ENCODE measurements at regions of chr10 and their contacts with region 1.

Region 1: DNA sequence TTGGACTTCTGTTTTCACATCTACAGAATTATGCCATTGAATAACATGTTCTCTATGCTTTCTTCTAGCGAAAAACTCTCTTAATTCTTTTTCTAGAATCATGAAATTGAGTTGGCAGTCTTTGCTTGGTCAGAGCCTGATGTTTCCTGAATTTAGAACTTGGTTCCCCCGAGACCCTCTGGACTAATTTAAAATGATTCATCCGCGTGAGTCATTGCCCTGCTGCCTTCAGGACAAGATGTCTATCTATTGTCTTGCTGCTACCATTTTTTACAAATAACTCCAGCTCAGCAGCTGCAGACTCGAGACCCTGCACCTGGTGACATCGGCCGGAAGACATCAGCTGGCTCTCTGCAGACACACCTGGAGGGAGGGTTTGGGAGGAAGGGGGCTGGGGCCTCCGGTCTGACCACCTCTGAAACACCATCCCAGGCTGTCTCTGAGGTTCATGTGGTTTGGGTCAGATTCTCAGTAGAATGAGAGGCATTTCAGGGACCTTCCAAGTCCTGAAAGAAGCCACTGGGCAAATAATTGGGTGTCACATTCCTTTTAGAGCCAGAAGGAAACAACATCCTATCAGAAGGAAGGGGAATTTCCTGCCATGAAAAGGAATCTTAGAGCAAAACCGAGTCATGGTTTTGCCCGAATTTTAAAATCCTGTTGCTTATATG is 20.9 kb upstream of the KLF6 start:
- DNase-seq: peak; percentile 45
- H3K4me3 Mint-ChIP-seq: peak overlapping the region; percentile 10
- H3K27ac Mint-ChIP-seq: no peak overlapping the region
- H3K4me1 Mint-ChIP-seq: peaks cover 73% of the 10 kb centered on the region
- H3K27me3 Mint-ChIP-seq: no peaks in the 10 kb centered on the region

Region 2: DNA sequence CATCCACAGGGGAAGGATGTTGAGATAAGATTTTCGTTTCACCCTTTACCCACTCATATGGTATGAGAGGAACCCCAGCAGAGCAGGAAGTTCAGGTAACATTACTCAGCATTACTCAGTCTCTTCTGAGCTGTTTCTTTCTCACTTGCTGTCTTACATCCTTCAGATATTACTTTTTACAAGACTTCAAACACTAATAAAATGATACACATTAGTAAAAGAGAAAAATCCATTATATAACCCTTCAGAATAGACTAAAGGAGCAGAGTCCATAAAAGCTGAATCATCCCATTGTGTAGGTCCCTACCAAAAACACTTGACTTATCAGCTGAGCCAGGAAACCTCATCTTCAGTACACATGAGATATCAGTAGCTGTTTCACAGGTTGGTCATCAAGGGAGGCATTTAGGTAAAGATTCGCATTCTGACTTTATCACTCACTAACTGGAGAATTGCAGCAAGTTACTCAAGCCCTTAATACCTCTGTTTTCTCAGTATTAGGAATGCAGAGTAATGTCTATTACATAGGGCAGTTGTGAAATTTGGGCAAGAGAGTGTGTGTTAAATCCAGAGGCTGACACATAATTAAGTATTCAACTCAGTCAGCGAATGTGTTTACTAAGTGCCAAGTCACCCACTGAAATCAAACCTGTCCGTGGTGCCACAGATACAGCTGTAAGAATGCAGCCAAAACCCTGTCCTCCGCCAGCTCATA is 65.6 kb before region 1 on chr10:
- CTCF ChIA-PET with region 1: no interaction called
- intact Hi-C with region 1: loop called (anchors 1 kb)
- DNase-seq: no peak
- H3K4me3 Mint-ChIP-seq: no peak overlapping the region
- H3K27ac Mint-ChIP-seq: peak overlapping the region; percentile 59
- H3K4me1 Mint-ChIP-seq: peaks cover 31% of the 10 kb centered on the region
- H3K27me3 Mint-ChIP-seq: no peaks in the 10 kb centered on the region

Region 3: DNA sequence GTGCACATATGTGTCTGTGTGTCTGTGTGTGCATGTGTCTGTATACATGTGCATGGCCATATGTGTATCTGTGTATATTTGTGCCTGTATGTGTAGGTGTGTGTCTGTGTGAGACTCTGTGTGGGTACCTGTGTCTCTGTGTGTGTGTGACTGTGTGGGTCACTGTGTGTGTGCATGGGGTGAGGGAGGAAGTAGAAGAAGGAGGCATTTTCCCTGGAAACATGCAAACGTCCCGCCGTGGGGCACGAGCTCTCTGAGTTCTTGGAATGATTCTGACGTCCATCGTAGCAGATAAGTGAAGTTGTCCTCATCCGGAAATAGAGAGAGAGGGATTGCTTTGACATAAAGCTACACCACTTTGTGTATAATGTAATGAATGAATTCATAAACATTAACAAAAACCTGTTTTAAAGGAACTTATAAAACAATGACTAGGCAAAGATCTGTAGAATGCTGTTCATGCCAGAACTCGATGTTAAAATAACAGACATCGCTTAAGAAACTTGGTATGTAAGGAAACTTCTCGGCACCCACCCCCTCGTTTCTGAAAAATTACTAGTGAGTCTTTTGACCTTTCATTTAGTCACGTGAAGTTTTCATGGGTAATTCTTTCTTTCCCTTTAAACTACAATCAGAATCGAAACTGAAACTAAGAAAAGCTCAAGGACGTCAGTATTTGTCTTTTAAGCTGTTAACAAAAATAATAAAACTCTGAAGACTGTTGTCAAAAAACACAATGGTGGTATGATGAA is 22.7 kb after region 1 on chr10:
- CTCF ChIA-PET with region 1: no interaction called
- intact Hi-C with region 1: loop called (anchors 1 kb)
- DNase-seq: peak; percentile 82
- H3K4me3 Mint-ChIP-seq: peak overlapping the region; percentile 52
- H3K27ac Mint-ChIP-seq: peak overlapping the region; percentile 87
- H3K4me1 Mint-ChIP-seq: peaks cover 43% of the 10 kb centered on the region
- H3K27me3 Mint-ChIP-seq: no peaks in the 10 kb centered on the region

Region 4: GRCh38 chr10:3867454-3868270 is 61.7 kb after region 1 on chr10:
- CTCF ChIA-PET with region 1: interaction called, 6 read pairs
- intact Hi-C with region 1: loop called (anchors 1 kb)
- DNase-seq: peak; percentile 46
- H3K4me3 Mint-ChIP-seq: no peak overlapping the region
- H3K27ac Mint-ChIP-seq: peak overlapping the region; percentile 70
- H3K4me1 Mint-ChIP-seq: peaks cover 53% of the 10 kb centered on the region
- H3K27me3 Mint-ChIP-seq: no peaks in the 10 kb centered on the region

Region 5: DNA sequence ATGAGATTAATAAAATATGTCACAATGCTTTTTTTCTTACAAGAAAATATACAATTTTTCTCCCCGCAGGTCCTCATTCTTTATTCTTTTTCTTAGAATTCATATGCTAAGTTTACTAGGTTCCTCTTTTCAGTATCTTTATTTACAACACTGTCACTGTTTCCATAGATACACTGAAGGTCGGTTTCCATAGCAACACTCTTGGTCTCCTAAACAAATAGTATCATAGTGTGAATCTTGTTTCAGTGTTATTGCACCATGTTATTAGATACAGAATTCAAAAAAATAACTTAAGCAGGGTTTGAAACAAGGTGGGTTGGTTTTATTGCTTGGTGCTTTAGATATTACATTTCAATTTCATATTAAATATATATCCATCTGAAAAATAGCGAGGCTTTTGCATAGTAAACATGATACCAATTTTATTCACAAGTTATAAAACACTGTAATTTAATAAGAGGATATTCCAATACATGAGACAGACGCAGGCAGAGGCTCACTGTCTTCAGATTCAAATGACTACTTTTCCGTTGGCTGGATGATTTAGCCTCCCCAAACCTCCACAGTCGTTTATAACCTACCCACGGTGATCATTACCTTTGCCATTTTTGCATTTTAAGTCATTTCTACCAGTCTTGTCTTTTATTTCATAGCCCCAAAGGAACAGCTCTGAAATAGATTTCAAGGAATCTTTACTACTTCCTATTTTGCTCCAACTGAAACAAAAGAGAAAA is 68.0 kb after region 1 on chr10:
- CTCF ChIA-PET with region 1: interaction called, 4 read pairs
- intact Hi-C with region 1: loop called (anchors 1 kb)
- DNase-seq: no peak
- H3K4me3 Mint-ChIP-seq: no peak overlapping the region
- H3K27ac Mint-ChIP-seq: peak overlapping the region; percentile 36
- H3K4me1 Mint-ChIP-seq: peaks cover 52% of the 10 kb centered on the region
- H3K27me3 Mint-ChIP-seq: no peaks in the 10 kb centered on the region

Region 6: GRCh38 chr10:3948843-3949242 is 142.9 kb after region 1 on chr10:
- CTCF ChIA-PET with region 1: no interaction called
- intact Hi-C with region 1: no loop called
- DNase-seq: peak; percentile 87
- H3K4me3 Mint-ChIP-seq: no peak overlapping the region
- H3K27ac Mint-ChIP-seq: no peak overlapping the region
- H3K4me1 Mint-ChIP-seq: peaks cover 41% of the 10 kb centered on the region
- H3K27me3 Mint-ChIP-seq: no peaks in the 10 kb centered on the region

Region 7: GRCh38 chr10:4241724-4242345 is 435.9 kb after region 1 on chr10:
- CTCF ChIA-PET with region 1: no interaction called
- intact Hi-C with region 1: loop called (anchors 10 kb)
- DNase-seq: no peak
- H3K4me3 Mint-ChIP-seq: no peak overlapping the region
- H3K27ac Mint-ChIP-seq: no peak overlapping the region
- H3K4me1 Mint-ChIP-seq: peaks cover 27% of the 10 kb centered on the region
- H3K27me3 Mint-ChIP-seq: peaks cover 2% of the 10 kb centered on the region

Measured in activated naive CD4-positive, alpha-beta T cell treated with anti-CD3 and anti-CD28 coated beads for 36 hours (primary cell).